Psoas muscle (tissue), 8 donors: ENCODE measurements at regions of chr10 and their contacts with region 1.

Region 1: DNA sequence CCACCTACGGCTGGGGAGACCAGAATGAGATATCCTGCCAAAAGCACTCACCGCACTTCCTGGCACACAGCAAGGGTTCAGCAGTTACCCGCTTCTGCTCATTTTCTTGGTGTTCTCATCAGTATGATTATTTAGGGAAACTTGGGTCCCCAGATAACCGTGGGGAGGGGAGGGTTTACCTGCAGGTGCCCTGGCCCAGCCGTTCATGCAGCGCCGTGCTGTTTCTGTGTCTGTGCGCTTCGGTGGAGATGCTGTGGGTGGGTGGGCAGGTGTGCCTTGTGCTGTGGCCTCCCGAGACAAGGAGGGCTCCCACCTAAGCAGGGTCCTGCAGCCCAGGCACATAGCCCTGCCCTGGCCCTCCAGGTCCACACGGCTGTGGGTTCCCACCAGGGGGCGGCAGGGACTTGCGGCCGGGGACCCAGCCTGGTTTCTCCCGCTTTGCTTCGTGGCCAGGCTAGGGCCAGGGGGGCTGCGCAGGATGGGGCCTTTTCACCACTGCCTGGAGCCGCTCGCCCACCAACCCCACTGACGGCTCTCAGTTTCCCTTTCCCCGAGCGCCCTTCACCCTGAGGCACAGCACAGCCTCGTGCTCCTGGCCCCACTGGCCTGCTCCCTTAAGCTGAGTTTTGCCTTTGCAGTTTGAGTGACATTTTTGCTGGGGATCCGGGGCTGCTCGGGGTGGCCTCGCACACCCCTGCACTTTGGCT is 78.5 kb downstream of the LHPP start:
- DNase-seq: peak; percentile 75 to 88
- ATAC-seq: peak; percentile 89 to 96 (median 91)
- H3K4me3 ChIP-seq: no peak overlapping the region
- H3K27ac ChIP-seq: no peak overlapping the region
- H3K4me1 ChIP-seq: peaks cover 4% of the 10 kb centered on the region
- H3K27me3 ChIP-seq: no peaks in the 10 kb centered on the region
- CTCF ChIP-seq: peak; percentile 84

Region 2: GRCh38 chr10:124565565-124566256 is 25.6 kb after region 1 on chr10:
- intact Hi-C with region 1: loop called in 1 of 2 experiments (anchors 2 kb)
- DNase-seq: peak; percentile 76 to 93
- ATAC-seq: peak; percentile 89 to 96 (median 90)
- H3K4me3 ChIP-seq: no peak overlapping the region
- H3K27ac ChIP-seq: peak overlapping the region; percentile 73
- H3K4me1 ChIP-seq: peaks cover 35% of the 10 kb centered on the region
- H3K27me3 ChIP-seq: no peaks in the 10 kb centered on the region
- CTCF ChIP-seq: peak; percentile 64

Region 3: GRCh38 chr10:124671486-124672075 is 131.5 kb after region 1 on chr10:
- intact Hi-C with region 1: no loop called
- DNase-seq: peak; percentile 70 to 86
- ATAC-seq: peak; percentile 48 to 72 (median 70)
- H3K4me3 ChIP-seq: no peak overlapping the region
- H3K27ac ChIP-seq: peak overlapping the region; percentile 58
- H3K4me1 ChIP-seq: peaks cover 87% of the 10 kb centered on the region
- H3K27me3 ChIP-seq: no peaks in the 10 kb centered on the region
- CTCF ChIP-seq: peak; percentile 29